ENCODE measurements at regions of chr7 and their contacts with region 1.

Region 1: DNA sequence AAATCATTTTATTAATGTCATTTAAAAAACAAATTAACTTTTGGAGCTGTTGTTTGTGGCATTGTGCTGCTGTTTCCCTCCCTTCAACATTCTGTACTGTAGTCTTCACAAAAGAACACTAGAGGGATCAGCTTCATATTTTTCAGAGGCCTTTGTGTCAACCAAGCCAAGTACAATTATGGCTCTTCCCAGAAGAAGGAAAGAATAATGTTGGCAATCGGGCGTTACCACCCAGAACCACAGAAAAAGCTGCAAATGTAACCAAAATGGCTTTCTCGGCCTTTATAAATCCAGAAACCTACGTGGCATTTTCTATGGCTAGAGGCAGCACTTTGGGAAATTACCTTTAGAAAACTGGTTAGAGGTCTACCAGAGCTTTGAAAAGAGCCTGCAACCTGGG is 98.8 kb upstream of the COL1A2 start:
- DNase-seq: peak; percentile 60
- H3K4me3 ChIP-seq: peak overlapping the region; percentile 41
- H3K27ac ChIP-seq: no peak overlapping the region
- H3K27me3 ChIP-seq: no peaks in the 10 kb centered on the region
- CTCF ChIP-seq: peak; percentile 80

Region 2: GRCh38 chr7:94170836-94171235 is 125.0 kb before region 1 on chr7:
- CTCF ChIA-PET with region 1: no interaction called
- POLR2A ChIA-PET with region 1: no interaction called
- DNase-seq: no peak
- H3K4me3 ChIP-seq: no peak overlapping the region
- H3K27ac ChIP-seq: no peak overlapping the region
- H3K27me3 ChIP-seq: no peaks in the 10 kb centered on the region
- CTCF ChIP-seq: no peak

Region 3: GRCh38 chr7:94348142-94348541 is 52.3 kb after region 1 on chr7:
- CTCF ChIA-PET with region 1: interaction called, 6 read pairs
- POLR2A ChIA-PET with region 1: interaction called, 14 read pairs
- DNase-seq: peak; percentile 85
- H3K4me3 ChIP-seq: peak overlapping the region; percentile 14; the same call in 1 of the 2 replicates
- H3K27ac ChIP-seq: peak overlapping the region; percentile 25
- H3K27me3 ChIP-seq: no peaks in the 10 kb centered on the region
- CTCF ChIP-seq: no peak

Region 4: GRCh38 chr7:94368371-94368791 is 72.5 kb after region 1 on chr7:
- CTCF ChIA-PET with region 1: interaction called, 12 read pairs
- POLR2A ChIA-PET with region 1: interaction called, 165 read pairs
- DNase-seq: peak; percentile 76
- H3K4me3 ChIP-seq: peak overlapping the region; percentile 36
- H3K27ac ChIP-seq: peak overlapping the region; percentile 87
- H3K27me3 ChIP-seq: no peaks in the 10 kb centered on the region
- CTCF ChIP-seq: no peak

Region 5: DNA sequence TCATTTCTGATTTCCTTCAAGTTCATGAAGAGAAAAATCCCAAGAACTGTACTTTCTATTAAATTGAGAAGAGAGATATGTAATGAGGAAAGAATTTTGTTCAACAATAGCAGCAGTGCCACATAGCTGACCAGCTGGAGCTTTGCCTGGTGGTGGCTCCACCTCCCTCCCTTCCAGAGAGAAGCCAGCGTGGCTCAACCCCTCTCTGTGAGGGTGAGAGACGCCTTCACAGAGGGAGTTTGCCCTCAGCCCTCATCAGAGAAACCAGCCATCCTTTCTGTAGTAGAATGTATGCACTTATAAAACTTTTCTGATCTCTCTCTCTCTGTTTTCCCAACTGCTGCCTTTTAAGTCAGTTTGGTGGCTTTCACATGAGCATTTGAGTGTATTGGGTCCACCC is 78.4 kb after region 1 on chr7:
- CTCF ChIA-PET with region 1: interaction called, 32 read pairs
- POLR2A ChIA-PET with region 1: interaction called, 165 read pairs
- DNase-seq: peak; percentile 87
- H3K4me3 ChIP-seq: peak overlapping the region; percentile 50
- H3K27ac ChIP-seq: peak overlapping the region; percentile 93
- H3K27me3 ChIP-seq: no peaks in the 10 kb centered on the region
- CTCF ChIP-seq: peak; percentile 14; the same call in 1 of the 2 replicates

Region 6: GRCh38 chr7:94395141-94396036 is 99.5 kb after region 1 on chr7:
- CTCF ChIA-PET with region 1: interaction called, 482 read pairs
- POLR2A ChIA-PET with region 1: interaction called, 450 read pairs
- DNase-seq: peak; percentile 64
- H3K4me3 ChIP-seq: peak overlapping the region; percentile 96
- H3K27ac ChIP-seq: peak overlapping the region; percentile 98
- H3K27me3 ChIP-seq: no peaks in the 10 kb centered on the region
- CTCF ChIP-seq: peak; percentile 77

Region 7: DNA sequence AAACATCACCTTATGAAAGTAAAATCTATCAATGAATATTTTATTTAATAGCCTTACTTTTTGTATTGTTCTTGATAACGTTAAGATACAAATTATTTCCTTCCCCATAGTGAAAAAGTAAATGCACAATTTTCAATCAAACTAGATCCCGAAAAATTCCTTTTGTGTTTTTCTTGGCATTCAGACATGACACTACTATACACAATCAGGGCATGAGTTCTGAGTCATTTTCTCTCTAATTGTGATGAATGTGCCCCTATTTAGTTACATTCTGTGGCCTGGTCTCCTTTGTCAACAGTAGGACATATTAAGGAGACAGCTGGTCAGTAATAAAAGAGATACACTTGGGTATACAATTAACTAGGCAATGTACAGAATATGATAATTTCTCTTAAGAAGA is 118.6 kb after region 1 on chr7:
- CTCF ChIA-PET with region 1: interaction called, 18 read pairs
- POLR2A ChIA-PET with region 1: interaction called, 51 read pairs
- DNase-seq: no peak
- H3K4me3 ChIP-seq: no peak overlapping the region
- H3K27ac ChIP-seq: no peak overlapping the region
- H3K27me3 ChIP-seq: no peaks in the 10 kb centered on the region
- CTCF ChIP-seq: no peak

Region 8: DNA sequence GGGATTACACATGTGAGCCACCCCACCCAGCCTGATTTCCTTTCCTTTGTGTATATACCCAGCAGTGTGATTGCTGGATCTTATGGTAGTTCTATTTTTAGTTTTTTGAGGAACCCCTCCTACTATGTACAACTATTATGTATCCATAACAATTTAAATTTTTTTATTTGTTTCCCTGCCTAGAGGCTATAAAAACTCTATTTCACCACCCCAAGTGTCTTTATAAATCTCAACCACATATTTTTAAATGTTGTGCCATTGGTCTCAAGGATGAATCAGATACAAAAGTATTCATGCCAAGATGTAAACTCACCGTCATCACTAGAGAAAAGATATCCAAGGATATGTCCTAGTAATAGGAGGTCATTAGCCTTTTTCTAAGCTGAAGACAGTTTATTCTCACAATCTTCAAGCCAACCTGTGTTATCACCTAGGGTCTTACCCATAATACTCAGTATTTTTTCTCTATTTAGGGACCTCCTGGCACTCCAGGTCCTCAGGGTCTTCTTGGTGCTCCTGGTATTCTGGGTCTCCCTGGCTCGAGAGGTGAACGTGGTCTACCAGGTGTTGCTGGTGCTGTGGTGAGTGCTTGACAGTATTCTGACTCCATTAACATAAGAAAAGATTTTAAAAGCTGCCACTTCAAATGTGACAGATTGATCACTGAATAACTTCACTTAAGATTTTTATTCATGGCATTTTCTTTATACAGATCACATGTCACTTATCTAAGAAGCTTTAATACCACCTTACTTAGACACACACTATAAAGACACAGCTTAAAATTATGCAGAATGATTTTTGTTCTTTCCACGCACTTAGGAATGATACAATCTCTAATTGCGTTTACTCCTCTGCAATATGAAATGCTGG is 128.2 kb after region 1 on chr7:
- CTCF ChIA-PET with region 1: interaction called, 13 read pairs
- POLR2A ChIA-PET with region 1: interaction called, 11 read pairs
- DNase-seq: peak; percentile 42
- H3K4me3 ChIP-seq: no peak overlapping the region
- H3K27ac ChIP-seq: peak overlapping the region; percentile 89
- H3K27me3 ChIP-seq: no peaks in the 10 kb centered on the region
- CTCF ChIP-seq: no peak